ENCODE measurements at regions of chr16 and their contacts with region 1.

Region 1: DNA sequence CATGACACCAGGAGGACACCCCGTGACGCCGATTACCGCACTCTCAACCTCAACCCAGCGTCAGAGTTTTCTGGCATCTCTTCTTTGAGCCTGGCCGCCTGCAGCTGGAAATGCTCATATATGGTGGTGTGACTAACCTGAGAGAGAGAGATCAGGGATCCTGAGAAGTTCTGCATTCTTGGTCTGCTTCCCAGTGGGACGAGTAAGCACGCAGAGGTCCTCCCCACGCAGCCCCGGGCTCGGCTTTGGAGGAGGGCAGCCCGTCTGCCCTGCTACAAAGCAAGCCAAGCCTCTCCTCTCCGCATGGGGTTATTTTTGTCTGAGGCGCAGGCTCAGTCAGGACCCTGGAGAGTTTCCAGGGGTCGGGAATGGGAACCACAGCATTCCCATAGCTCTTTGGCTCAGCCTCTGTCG is 16.5 kb downstream of the CRISPLD2 start:
- DNase-seq: peak; percentile 89

Region 2: DNA sequence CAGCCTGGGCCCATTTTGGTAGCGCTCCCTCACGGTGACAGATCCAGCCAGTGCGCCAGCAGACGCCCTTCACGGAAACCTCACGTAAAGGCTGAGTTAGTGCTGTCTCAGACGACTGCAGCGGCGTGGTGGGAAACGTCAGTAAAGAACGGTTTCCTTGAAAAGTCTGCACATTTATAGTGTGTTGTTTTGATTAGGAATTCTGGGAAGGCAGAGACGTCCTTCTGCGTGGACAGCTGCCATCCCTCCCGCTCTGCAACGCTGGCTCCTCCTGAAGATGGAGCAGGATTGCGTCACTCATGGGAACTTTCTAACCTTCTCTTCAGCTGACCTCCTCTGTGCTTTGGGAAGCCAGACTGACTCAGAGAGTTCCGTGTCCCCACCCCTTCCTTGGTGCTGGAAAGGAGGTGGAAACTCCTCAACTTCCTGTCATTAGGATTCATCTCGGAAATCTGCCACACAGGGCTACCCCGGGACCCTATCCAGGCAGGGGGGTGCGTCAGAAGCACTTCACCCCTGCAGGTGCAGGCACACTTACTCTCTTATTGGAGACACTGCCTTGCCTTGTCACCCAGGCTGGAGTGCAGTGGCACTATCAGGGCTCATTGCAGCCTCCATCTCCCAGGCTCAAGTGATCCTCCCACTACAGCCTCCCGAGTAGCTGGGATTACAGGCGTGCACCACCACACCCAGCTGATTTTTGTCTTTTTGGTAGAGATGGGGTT is 40.8 kb before region 1 on chr16:
- intact Hi-C with region 1: loop called (anchors 2 kb)
- DNase-seq: no peak

Region 3: DNA sequence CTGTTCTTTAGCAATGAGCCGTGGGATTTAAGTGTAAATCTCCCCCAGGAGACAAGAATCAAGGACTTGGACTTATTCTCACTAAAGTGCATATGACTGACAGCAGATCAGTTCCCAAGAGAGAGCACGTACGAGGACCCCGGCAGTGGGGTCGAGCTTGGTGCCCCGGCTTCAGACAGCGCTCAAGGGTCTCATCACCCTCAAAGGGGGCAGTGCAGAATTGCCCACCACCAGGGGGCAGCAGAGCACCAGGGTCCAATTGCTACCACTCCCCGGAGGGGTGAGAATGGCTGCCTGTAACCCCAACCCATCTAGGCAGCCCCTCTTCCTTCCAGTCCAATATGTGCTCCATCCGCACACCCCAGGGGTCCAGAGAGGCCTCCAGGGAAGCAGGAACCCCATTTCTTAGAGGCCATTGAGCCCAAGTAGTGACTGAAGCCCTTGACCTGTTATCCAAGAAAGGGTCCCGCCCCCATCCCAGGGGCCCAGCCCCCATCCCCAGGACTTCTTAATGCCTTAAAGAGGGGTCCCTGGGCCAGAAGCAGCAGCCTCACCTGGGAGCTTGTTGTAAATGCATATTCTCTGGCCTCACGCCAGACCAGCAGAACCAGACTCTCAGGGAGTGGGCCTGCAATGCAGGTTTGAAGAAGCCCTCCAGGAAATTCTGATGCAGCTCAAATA is 89.0 kb after region 1 on chr16:
- intact Hi-C with region 1: loop called (anchors 5 kb)
- DNase-seq: peak; percentile 84

Measured in cardiac septum (tissue), 1 donor.